ENCODE measurements at regions of chr10 and their contacts with region 1.

Region 1: DNA sequence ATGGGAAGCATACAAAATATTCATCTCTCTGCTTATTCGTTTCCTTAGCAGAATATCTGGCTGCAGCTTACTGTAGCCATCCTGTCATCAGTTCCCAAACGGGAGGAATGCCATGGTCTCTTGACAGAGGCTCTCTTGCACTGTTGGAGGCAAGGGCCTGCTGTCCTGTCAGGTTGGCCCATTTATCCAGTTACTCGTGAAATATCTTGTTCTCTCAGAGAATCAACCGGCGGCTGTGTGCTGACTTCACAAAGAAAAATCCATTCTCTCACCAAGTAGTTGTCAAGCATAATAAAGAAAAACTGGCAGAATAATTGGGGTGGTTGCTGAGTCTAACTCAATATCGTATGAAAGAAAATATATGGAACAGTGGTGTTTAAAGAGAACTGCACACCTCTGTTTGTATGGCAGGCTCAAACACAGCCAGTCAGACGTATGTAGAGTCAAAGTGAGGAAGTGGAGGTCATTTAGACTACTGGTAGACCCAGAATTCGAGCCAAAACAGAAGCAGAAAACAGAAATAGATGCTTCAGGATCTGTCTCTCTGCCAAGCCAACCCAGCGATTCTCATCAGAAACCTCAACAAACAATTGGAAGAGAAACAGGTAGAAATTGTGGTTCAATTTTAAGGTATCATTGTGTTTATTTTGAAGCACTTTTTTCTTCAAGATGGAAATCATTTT is 349.2 kb upstream of the PRKCQ start:
- DNase-seq: no peak
- H3K4me3 Mint-ChIP-seq: no peak overlapping the region
- H3K27ac Mint-ChIP-seq: no peak overlapping the region
- H3K4me1 Mint-ChIP-seq: peaks cover 43% of the 10 kb centered on the region
- H3K27me3 Mint-ChIP-seq: no peaks in the 10 kb centered on the region

Region 2: DNA sequence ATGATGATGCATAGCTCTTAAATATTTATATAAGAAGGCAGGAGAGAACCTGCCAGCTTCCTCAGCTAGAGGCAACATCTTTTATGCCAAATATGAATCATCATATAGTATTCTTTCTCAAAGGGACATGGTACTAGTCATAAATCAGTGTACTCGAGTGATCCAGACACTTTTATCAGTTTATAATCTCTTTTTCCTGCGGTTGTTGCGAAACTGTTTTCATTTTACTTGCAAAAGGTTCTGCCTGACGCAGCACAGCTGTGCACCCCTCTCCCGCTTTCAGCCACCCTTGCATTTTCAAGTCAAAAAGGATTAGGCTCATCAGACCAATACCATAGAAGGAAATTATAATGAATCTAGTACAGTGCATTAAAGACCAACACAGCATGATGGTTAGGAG is 16.9 kb before region 1 on chr10:
- CTCF ChIA-PET with region 1: interaction called, 4 read pairs
- POLR2A ChIA-PET with region 1: no interaction called
- intact Hi-C with region 1: loop called (anchors 1 kb)
- DNase-seq: peak; percentile 54
- H3K4me3 Mint-ChIP-seq: no peak overlapping the region
- H3K27ac Mint-ChIP-seq: no peak overlapping the region
- H3K4me1 Mint-ChIP-seq: peaks cover 3% of the 10 kb centered on the region
- H3K27me3 Mint-ChIP-seq: no peaks in the 10 kb centered on the region

Region 3: DNA sequence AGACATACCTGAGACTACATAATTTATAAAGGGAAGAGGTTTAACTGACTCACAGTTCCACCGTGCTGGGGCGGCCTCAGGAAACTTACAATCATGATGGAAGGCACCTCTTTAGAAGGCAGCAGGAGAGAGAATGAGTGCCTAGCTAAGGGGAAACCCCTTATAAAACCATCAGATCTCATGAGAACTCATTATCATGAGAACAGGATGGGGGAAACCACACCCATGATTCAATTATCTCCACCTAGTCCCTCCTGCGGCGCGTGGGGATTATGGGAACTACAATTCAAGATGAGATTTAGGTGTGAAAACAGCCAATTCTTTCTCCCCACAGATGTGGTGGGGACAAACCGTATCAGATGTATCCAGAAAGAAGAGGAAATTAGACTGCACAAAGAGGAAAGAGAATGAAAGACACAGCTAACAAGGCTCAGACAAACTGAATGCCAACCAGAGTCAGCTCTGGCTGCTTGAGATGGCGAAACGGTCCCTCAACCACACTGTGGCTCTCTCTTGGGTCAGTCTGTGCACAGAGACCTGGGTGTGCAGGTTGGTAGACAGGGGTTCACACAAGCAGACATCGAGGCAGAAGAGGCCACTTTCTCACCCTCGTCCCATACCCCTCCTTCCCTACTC is 106.0 kb after region 1 on chr10:
- CTCF ChIA-PET with region 1: no interaction called
- POLR2A ChIA-PET with region 1: no interaction called
- intact Hi-C with region 1: loop called (anchors 5 kb)
- DNase-seq: peak; percentile 43
- H3K4me3 Mint-ChIP-seq: no peak overlapping the region
- H3K27ac Mint-ChIP-seq: no peak overlapping the region
- H3K4me1 Mint-ChIP-seq: peaks cover 28% of the 10 kb centered on the region
- H3K27me3 Mint-ChIP-seq: peaks cover 1% of the 10 kb centered on the region

Measured in activated CD4-positive, alpha-beta memory T cell treated with anti-CD3 and anti-CD28 coated beads for 36 hours (primary cell).